Left ventricle myocardium inferior (tissue), 1 donor: ENCODE measurements at regions of chr14 and their contacts with region 1.

Region 1: DNA sequence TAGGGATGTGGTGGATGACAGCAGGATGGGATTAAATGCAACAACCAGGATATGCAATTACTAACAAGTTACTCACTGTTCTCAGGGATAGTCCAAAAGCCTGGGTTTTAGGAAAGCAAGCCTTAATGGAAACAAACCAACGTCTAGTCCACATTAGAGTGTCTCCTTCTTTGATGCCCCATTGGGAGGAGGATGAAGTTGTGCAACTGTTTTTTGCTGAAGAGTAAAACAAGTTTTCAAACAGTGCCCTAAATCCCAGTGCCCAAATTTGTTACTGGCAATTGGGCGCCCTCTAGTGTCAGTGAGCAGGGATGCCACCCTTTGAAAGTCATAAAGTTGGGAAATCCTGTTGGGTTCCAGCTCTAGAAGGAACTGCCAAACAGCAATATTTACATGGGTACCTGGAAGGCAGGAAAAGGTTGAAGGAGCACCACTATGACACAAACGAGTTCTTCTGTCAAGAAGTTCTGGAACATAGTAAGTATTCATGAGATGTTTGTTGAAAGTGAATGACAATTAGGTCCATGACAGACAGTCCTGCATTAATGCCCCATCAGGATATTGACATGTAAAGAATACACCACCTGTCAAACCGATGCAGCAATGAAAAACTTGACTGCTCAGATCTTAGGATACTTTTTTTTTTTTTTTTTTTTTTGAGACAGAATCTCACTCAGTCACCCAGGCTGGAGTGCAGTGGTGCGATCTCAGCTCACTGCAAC is 11.1 kb upstream of the DPF3 start:
- DNase-seq: peak; percentile 41
- H3K4me3 ChIP-seq: no peak overlapping the region
- H3K27ac ChIP-seq: no peak overlapping the region
- H3K4me1 ChIP-seq: peaks cover 41% of the 10 kb centered on the region
- H3K27me3 ChIP-seq: no peaks in the 10 kb centered on the region
- CTCF ChIP-seq: peak; percentile 95

Region 2: DNA sequence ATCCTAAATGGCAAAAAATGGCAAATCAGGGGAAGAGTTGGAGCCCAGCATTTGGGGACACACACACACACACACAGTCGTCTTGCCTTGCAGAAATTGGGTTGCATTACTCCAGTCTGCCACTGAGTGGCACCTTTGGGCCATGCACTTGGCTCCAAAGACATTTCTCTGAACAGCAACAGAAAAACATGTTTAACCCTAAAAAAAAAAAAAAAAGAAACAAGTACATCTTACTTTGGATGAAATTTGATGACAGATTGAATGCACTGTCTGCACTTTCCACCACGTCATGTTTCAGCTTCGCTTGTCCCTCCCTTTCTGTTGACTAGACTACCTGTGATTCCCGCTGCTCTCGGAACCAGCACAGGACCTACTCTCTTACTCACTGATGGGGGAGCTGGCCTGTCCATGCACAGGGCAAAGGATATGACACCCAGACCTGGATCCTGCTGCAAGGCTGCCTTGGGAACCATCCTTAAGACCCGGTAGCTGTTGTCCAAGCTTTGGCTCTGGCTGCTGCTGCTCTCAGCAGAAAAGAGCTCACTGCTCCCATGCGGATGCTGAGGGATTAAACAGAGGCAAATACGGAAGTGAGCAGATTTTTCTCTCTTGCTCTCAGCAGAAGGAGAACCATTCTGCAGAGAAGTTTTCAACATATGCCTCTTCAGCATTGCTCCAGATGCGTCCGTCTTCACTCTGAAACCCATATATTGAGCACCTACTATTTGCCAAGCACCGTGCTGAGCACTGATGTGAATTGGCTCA is 387.9 kb before region 1 on chr14:
- intact Hi-C with region 1: loop called (anchors 2 kb)
- DNase-seq: peak; percentile 42
- H3K4me3 ChIP-seq: no peak overlapping the region
- H3K27ac ChIP-seq: no peak overlapping the region
- H3K4me1 ChIP-seq: peaks cover 5% of the 10 kb centered on the region
- H3K27me3 ChIP-seq: no peaks in the 10 kb centered on the region
- CTCF ChIP-seq: peak; percentile 91

Region 3: DNA sequence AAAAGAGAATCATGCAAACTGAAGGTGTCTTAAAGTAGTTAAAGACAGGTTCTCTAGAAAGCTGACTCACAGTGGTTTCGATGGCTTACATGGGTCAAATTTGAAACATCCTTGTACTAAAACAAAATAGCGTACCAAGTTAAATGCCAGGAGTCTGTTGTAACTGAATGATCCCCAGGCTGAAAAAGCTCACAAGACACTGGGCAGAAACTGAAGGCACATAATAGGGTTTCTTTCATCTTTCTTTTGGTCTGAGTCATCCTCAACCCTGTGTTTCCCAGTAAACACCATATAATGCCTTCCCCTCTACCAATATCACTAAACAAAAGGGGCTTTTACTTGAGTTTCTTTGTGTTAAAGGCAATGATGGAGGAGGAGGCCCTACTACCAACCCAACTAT is 109.1 kb after region 1 on chr14:
- intact Hi-C with region 1: no loop called
- DNase-seq: no peak
- H3K4me3 ChIP-seq: no peak overlapping the region
- H3K27ac ChIP-seq: no peak overlapping the region
- H3K4me1 ChIP-seq: peaks cover 17% of the 10 kb centered on the region
- H3K27me3 ChIP-seq: no peaks in the 10 kb centered on the region
- CTCF ChIP-seq: no peak